ENCODE measurements at regions of chr4 and their contacts with region 1.

Region 1: GRCh38 chr4:153750197-153750817 is 9.5 kb downstream of the RNF175 start:
- DNase-seq: peak; percentile 97
- H3K4me3 Mint-ChIP-seq: no peak overlapping the region
- H3K27ac Mint-ChIP-seq: no peak overlapping the region
- H3K4me1 Mint-ChIP-seq: peaks cover 16% of the 10 kb centered on the region
- H3K27me3 Mint-ChIP-seq: no peaks in the 10 kb centered on the region
- CTCF ChIP-seq: peak; percentile 75

Region 2: DNA sequence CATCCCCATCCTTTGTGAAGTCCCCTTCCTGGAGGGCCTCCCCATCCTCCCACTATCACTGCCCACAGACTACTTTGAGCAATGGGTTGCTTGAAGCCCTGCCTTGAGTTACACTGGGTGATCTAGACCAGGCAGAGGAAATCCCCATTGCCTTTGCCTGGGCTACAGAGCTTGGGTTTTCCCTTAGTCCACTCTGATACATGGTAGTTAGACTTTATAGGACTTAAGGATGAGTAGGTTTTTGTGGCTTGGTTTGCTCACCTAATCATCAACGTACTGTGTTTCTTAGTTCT is 227.6 kb before region 1 on chr4:
- CTCF ChIA-PET with region 1: no interaction called
- POLR2A ChIA-PET with region 1: no interaction called
- intact Hi-C with region 1: no loop called
- DNase-seq: no peak
- H3K4me3 Mint-ChIP-seq: no peak overlapping the region
- H3K27ac Mint-ChIP-seq: no peak overlapping the region
- H3K4me1 Mint-ChIP-seq: peaks cover 15% of the 10 kb centered on the region
- H3K27me3 Mint-ChIP-seq: no peaks in the 10 kb centered on the region
- CTCF ChIP-seq: no peak

Region 3: DNA sequence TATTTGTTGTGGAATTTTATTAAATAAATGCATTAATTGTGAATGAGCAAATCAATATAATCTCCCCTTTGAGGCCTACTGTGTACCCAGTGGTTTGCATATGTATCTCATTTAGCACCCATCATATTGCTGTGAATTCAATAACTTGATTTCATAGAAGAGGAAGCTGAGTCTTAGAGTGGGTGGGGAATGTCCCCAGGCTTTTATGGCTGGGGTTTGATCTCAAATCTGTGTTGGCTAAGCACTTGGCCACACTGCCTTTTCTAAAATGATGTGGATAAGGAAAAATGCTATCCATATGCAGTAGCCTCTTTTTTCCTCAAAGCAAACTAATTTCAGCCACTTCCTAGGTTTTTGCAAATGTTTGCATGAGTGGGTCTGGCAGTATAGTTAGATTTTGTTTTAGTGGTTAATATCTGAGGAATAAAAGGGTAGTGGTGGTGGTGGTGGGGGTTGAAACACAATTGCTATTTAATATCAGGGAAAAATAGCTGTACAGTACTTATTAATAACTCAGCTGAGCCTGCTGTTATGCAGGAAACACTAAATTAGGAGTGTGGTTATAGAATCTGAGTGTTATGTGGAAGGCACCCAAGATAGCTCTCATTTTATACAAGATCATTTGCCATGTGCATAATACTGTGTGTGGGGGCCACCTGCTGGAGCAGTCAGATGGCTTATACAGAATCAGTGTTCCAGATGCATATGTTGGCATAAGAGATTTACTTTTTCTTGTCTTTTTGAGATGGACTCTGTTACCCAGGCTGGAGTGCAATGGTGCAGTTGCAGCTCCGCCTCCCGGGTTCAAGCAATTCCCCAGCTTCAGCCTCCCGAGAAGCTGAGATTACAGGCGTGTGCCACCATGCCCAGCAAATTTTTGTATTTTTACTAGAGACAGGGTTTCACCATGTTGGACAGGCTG is 176.2 kb before region 1 on chr4:
- CTCF ChIA-PET with region 1: interaction called, 11 read pairs
- POLR2A ChIA-PET with region 1: no interaction called
- intact Hi-C with region 1: loop called (anchors 1 kb)
- DNase-seq: peak; percentile 70
- H3K4me3 Mint-ChIP-seq: no peak overlapping the region
- H3K27ac Mint-ChIP-seq: no peak overlapping the region
- H3K4me1 Mint-ChIP-seq: no peaks in the 10 kb centered on the region
- H3K27me3 Mint-ChIP-seq: no peaks in the 10 kb centered on the region
- CTCF ChIP-seq: peak; percentile 73

Region 4: GRCh38 chr4:153643406-153644383 is 106.6 kb before region 1 on chr4:
- CTCF ChIA-PET with region 1: interaction called, 50 read pairs
- POLR2A ChIA-PET with region 1: interaction called, 5 read pairs
- intact Hi-C with region 1: no loop called
- DNase-seq: peak; percentile 61
- H3K4me3 Mint-ChIP-seq: no peak overlapping the region
- H3K27ac Mint-ChIP-seq: no peak overlapping the region
- H3K4me1 Mint-ChIP-seq: no peaks in the 10 kb centered on the region
- H3K27me3 Mint-ChIP-seq: no peaks in the 10 kb centered on the region
- CTCF ChIP-seq: peak; percentile 45

Region 5: DNA sequence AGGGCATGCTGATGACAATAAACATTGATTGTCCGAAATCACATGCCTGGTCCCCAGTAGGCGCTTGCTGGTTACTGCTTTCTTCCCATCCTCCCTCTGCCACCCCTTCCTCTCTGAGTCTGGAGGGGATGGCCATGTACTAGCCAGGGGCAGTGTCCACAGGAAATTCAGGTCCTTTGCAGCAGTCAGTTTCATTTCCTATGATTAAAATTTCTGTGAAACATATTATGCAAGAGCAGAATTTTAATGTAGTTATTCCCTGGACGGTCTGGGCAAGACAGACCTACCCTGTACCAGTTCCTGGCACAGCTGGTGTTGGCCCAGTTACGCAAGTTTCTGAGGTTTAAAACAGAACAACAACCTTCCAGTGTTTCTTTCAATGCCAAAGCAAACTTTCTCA is 94.4 kb before region 1 on chr4:
- CTCF ChIA-PET with region 1: interaction called, 50 read pairs
- POLR2A ChIA-PET with region 1: interaction called, 5 read pairs
- intact Hi-C with region 1: loop called (anchors 5 kb)
- DNase-seq: peak; percentile 97
- H3K4me3 Mint-ChIP-seq: peak overlapping the region; percentile 13
- H3K27ac Mint-ChIP-seq: peak overlapping the region; percentile 46
- H3K4me1 Mint-ChIP-seq: peaks cover 41% of the 10 kb centered on the region
- H3K27me3 Mint-ChIP-seq: no peaks in the 10 kb centered on the region
- CTCF ChIP-seq: no peak

Region 6: DNA sequence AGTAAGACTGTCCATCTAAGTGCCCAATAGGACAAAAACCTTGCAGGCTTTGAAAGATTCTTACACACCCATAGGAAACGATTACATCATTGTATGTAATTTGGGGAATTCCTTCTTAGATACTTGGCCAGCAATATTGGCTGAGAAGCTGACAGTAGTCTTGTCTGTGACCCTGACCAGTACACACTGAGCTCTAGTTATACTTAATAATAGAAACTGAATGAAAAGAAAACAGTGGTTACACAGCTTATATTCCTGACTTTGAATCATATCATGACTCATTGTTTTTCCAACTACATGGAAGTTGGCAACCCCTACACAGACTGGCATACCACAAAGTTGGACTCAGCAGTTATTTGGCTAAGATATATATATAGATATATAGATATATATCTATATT is 73.3 kb before region 1 on chr4:
- CTCF ChIA-PET with region 1: interaction called, 11 read pairs
- POLR2A ChIA-PET with region 1: interaction called, 6 read pairs
- intact Hi-C with region 1: no loop called
- DNase-seq: peak; percentile 95
- H3K4me3 Mint-ChIP-seq: no peak overlapping the region
- H3K27ac Mint-ChIP-seq: peak overlapping the region; percentile 23
- H3K4me1 Mint-ChIP-seq: no peaks in the 10 kb centered on the region
- H3K27me3 Mint-ChIP-seq: no peaks in the 10 kb centered on the region
- CTCF ChIP-seq: no peak

Measured in MCF 10A (cell line).